Heart left ventricle (tissue), 16 donors: ENCODE measurements at regions of chr15 and their contacts with region 1.

Region 1: GRCh38 chr15:82650046-82650670 is 3.0 kb upstream of the CPEB1 start:
- DNase-seq: no peak
- ATAC-seq: no peak
- H3K4me3 ChIP-seq: no peak overlapping the region
- H3K27ac ChIP-seq: no peak overlapping the region
- H3K4me1 ChIP-seq: peaks cover 5 to 27% (median 16%) of the 10 kb centered on the region in 12 donors
- H3K27me3 ChIP-seq: peaks cover 18 to 52% (median 32%) of the 10 kb centered on the region in 9 donors
- CTCF ChIP-seq: no peak
- POLR2A ChIP-seq: no peak

Region 2: GRCh38 chr15:82003916-82004315 is 646.2 kb before region 1 on chr15:
- intact Hi-C with region 1: no loop called
- DNase-seq: no peak
- ATAC-seq: no peak
- H3K4me3 ChIP-seq: no peak overlapping the region
- H3K27ac ChIP-seq: no peak overlapping the region
- H3K4me1 ChIP-seq: no peaks in the 10 kb centered on the region
- H3K27me3 ChIP-seq: no peaks in the 10 kb centered on the region
- CTCF ChIP-seq: no peak
- POLR2A ChIP-seq: no peak

Region 3: DNA sequence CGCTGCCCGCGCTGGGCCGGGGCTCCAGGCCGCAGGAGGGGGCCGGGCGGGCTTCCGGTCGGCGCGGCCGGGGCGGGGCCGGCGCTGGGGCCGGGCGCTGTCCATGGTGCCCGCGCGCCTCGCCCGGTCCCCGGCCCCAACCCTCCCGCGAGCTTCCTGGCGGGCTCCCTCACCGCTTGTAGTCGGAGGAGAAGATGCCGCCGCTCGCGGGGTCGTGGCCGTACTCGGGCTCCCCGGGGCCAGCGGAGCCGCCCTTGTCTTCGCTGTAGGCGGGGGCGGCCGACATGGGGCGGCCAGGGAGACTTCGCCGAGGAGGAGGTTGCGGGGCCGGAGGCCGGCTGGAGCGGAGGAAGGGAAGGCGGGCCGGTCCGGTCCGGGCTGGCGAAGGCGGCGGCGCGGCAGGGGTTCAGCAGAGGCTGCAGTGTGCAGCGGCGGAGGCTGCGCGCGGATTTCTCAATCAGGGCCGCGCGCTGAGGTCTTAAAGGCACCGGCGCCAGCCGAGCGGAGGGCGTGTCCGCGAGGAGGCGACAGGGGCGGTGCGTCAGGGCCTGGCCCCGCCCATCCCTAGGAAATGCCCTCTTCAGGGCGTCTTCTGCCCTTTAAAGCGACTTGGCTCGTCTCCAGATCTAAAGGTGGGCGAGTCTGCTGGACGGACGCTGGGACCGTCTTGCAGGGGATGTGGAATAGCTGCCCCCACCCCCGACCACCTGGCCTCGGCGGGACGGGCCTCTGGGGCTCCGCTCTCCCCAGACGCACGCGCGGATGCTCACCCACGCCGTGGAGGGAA is 59.5 kb after region 1 on chr15 and contains the start of gene AP3B2:
- intact Hi-C with region 1: loop called in 1 of 10 experiments (anchors 10 kb)
- DNase-seq: peak; percentile 35 to 73 (median 56)
- ATAC-seq: peak; percentile 32 to 98 (median 90)
- H3K4me3 ChIP-seq: peak within 1 kb of the TSS; percentile 33 to 73 (median 64)
- H3K27ac ChIP-seq: peak within 1 kb of the TSS in 1 of 12 donors; percentile 59
- H3K4me1 ChIP-seq: peaks cover 0 to 17% (median 9%) of the 10 kb centered on the region in 12 donors
- H3K27me3 ChIP-seq: peaks cover 0 to 20% (median 4%) of the 10 kb centered on the region in 9 donors
- CTCF ChIP-seq: no peak
- POLR2A ChIP-seq: no peak
- total RNA-seq, gene AP3B2: 0.22 to 5.2 (median 0.54) TPM in 6 of 9 donors, not detected in the others

Region 4: DNA sequence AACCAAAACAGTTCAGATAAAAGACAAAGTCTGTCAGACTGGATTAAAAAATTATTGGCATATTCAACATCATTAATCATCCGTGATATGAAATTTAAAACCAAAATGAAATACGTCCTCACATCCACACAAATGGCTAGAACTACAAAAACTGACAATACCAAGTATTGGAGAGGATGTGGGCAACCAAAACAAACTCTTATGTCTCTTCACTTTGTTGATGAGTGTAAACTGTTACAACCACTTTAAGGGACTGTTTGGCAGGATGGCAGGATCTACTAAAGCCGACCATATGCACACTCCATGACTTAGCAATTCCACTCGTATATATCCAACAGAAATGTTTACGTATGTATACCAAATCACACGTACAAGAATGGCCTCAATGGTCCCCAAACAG is 386.1 kb after region 1 on chr15:
- intact Hi-C with region 1: no loop called
- DNase-seq: no peak
- ATAC-seq: no peak
- H3K4me3 ChIP-seq: no peak overlapping the region
- H3K27ac ChIP-seq: no peak overlapping the region
- H3K4me1 ChIP-seq: peaks cover 0 to 4% (median 0%) of the 10 kb centered on the region in 12 donors
- H3K27me3 ChIP-seq: no peaks in the 10 kb centered on the region
- CTCF ChIP-seq: no peak
- POLR2A ChIP-seq: no peak